ENCODE measurements at regions of chr9 and their contacts with region 1.

Region 1: GRCh38 chr9:22147813-22148524 is 138.9 kb upstream of the CDKN2B start:
- DNase-seq: no peak
- ATAC-seq: no peak

Region 2: GRCh38 chr9:22060831-22061383 is 87.1 kb before region 1 on chr9:
- intact Hi-C with region 1: loop called (anchors 10 kb)
- DNase-seq: no peak
- ATAC-seq: peak; percentile 89